PC-3 (cell line): ENCODE measurements at regions of chr10 and their contacts with region 1.

Region 1: DNA sequence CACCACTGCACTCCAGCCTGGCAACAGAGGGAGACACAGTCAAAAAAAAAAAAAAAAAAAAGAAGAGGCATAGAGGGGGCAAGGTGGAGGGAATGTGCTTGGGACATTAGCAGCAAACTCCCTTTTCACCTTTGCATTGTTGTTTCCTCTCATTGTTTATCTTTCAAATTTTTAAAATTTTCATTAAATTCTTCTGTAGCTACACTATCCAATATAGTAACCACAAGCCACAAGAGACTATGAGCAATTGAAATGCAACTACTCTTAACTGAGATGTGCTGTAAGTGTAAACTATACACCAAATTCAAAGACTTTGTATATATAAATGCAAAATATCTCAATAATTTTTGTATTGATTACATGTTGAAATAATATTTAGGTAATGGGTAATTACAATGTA is 43.4 kb downstream of the EBLN1 start:
- DNase-seq: peak; percentile 54
- ATAC-seq: peak; percentile 90
- H3K4me3 ChIP-seq: no peak overlapping the region
- H3K27ac ChIP-seq: no peak overlapping the region
- H3K4me1 ChIP-seq: peaks cover 18% of the 10 kb centered on the region
- H3K27me3 ChIP-seq: no peaks in the 10 kb centered on the region
- CTCF ChIP-seq: no peak

Region 2: DNA sequence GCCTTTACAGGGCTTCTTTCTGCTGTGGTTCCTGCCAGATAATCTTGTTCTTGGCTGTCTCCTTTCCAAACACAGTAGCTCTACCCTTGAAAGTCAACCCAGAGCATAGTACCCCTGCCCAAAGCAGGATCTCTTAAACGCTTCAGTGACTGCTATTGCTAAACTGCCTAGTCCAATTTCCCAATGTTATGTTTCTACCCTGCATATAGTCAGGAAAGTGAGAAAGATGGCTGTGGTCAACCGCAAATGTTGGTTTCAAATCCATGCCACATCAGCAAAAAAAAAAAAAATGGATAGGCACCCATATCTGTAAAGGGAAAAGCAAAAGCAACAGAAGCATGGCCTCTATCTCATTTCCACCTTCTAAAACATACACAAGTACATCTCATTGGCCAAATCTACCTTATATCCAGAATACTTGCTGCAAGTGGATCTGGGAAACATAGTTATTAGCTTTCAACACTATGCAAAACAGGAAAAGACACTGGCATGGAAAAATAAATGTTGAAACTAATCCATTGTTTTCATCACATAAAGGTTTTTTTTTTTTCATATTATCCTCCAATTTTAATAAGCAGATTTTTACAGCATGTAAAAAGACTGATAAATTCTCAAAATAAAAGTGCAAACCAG is 230.7 kb before region 1 on chr10:
- CTCF ChIA-PET with region 1: interaction called, 11 read pairs
- POLR2A ChIA-PET with region 1: no interaction called
- intact Hi-C with region 1: no loop called
- DNase-seq: no peak
- ATAC-seq: no peak
- H3K4me3 ChIP-seq: no peak overlapping the region
- H3K27ac ChIP-seq: no peak overlapping the region
- H3K4me1 ChIP-seq: no peaks in the 10 kb centered on the region
- H3K27me3 ChIP-seq: no peaks in the 10 kb centered on the region
- CTCF ChIP-seq: no peak

Region 3: GRCh38 chr10:22010973-22011408 is 163.5 kb before region 1 on chr10:
- CTCF ChIA-PET with region 1: no interaction called
- POLR2A ChIA-PET with region 1: no interaction called
- intact Hi-C with region 1: loop called (anchors 2 kb)
- DNase-seq: peak; percentile 61
- ATAC-seq: no peak; the same call in 1 of the 2 replicates
- H3K4me3 ChIP-seq: no peak overlapping the region
- H3K27ac ChIP-seq: no peak overlapping the region
- H3K4me1 ChIP-seq: peaks cover 18% of the 10 kb centered on the region; the same call in 1 of the 2 replicates
- H3K27me3 ChIP-seq: no peaks in the 10 kb centered on the region
- CTCF ChIP-seq: peak; percentile 38; the same call in 1 of the 2 replicates

Region 4: GRCh38 chr10:22228943-22229801 is 54.7 kb after region 1 on chr10:
- CTCF ChIA-PET with region 1: no interaction called
- POLR2A ChIA-PET with region 1: no interaction called
- intact Hi-C with region 1: loop called (anchors 1 kb)
- DNase-seq: peak; percentile 86
- ATAC-seq: peak; percentile 71
- H3K4me3 ChIP-seq: peak overlapping the region; percentile 99
- H3K27ac ChIP-seq: peak overlapping the region; percentile 86
- H3K4me1 ChIP-seq: peaks cover 14% of the 10 kb centered on the region
- H3K27me3 ChIP-seq: no peaks in the 10 kb centered on the region
- CTCF ChIP-seq: no peak